ENCODE measurements at regions of chr1 and their contacts with region 1.

Region 1: DNA sequence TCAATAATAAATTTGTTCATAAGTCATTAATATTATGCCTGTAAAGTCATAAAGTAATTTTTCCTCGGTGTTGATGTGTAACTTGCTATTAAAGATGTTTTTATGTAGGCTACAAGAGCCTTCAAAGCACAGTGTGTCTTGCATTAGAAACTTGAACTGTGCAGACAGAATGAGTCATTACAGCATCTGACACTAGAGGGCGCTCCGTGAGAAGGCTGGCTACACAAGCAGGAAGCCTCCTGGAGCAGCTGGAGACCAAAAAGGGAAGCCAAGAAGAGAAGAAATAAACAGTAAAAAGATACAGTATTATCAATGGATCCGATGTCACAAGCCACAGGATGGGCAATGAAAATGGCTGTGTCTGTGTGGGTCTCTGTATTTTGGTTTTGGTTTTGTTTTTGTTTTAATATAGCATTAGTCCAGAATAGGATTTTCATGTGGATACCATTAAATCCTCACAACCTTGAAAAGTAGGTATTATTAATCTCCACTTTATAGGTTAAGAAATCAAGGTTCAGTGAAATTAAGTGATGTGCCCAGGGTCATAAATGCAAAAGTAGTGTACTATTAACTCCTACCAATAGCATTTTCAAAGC is 16.1 kb upstream of the LRRC8D start:
- DNase-seq: peak; percentile 75
- H3K4me3 ChIP-seq: peak overlapping the region in 1 of 2 experiments; percentile 24; a peak in 1 of 4 replicates
- H3K27ac ChIP-seq: no peak overlapping the region
- H3K4me1 ChIP-seq: no peaks in the 10 kb centered on the region; a peak in 1 of 4 replicates
- H3K27me3 ChIP-seq: no peaks in the 10 kb centered on the region
- CTCF ChIP-seq: peak; percentile 95
- EP300 ChIP-seq: no peak
- RAD21 ChIP-seq: peak; percentile 96

Region 2: GRCh38 chr1:89780721-89781120 is 24.0 kb before region 1 on chr1:
- CTCF ChIA-PET with region 1: interaction called, 13 read pairs
- POLR2A ChIA-PET with region 1: no interaction called
- DNase-seq: peak; percentile 31
- H3K4me3 ChIP-seq: no peak overlapping the region
- H3K27ac ChIP-seq: no peak overlapping the region
- H3K4me1 ChIP-seq: no peaks in the 10 kb centered on the region; a peak in 1 of 4 replicates
- H3K27me3 ChIP-seq: no peaks in the 10 kb centered on the region
- CTCF ChIP-seq: peak; percentile 63
- EP300 ChIP-seq: no peak
- RAD21 ChIP-seq: peak; percentile 70

Region 3: DNA sequence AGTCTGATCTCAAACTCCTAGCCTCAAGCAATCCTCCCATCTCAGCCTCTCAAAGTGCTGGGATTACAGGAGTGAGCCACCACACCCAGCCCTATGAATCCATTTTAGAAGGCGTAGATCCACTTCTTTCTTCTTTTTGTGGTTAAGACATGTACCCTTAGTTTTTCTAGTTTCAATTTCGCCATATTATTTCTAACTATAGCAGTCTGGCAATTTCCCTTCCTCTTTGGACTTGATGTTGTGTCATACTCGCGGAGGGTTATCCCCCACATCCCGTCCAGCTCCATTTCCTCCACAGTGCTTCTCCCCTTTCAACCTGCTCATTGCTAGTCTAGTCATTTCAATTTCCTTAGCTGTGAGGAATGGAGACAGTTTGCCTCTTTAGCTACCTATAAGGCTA is 10.9 kb after region 1 on chr1:
- CTCF ChIA-PET with region 1: interaction called, 24 read pairs
- POLR2A ChIA-PET with region 1: no interaction called
- DNase-seq: no peak
- H3K4me3 ChIP-seq: no peak overlapping the region
- H3K27ac ChIP-seq: no peak overlapping the region
- H3K4me1 ChIP-seq: peaks cover 4% of the 10 kb centered on the region in 2 experiments; a peak in 3 of 4 replicates
- H3K27me3 ChIP-seq: no peaks in the 10 kb centered on the region
- CTCF ChIP-seq: no peak
- EP300 ChIP-seq: no peak
- RAD21 ChIP-seq: no peak

Region 4: GRCh38 chr1:89843281-89844121 is 38.8 kb after region 1 on chr1:
- CTCF ChIA-PET with region 1: interaction called, 17 read pairs
- POLR2A ChIA-PET with region 1: no interaction called
- DNase-seq: peak; percentile 93
- H3K4me3 ChIP-seq: peak overlapping the region; percentile 72 to 77
- H3K27ac ChIP-seq: peak overlapping the region; percentile 43 to 55; a peak in 3 of 4 replicates
- H3K4me1 ChIP-seq: peaks cover 7 to 22% of the 10 kb centered on the region in 2 experiments; a peak in 3 of 4 replicates
- H3K27me3 ChIP-seq: no peaks in the 10 kb centered on the region
- CTCF ChIP-seq: peak; percentile 72
- EP300 ChIP-seq: no peak
- RAD21 ChIP-seq: peak; percentile 46

Region 5: DNA sequence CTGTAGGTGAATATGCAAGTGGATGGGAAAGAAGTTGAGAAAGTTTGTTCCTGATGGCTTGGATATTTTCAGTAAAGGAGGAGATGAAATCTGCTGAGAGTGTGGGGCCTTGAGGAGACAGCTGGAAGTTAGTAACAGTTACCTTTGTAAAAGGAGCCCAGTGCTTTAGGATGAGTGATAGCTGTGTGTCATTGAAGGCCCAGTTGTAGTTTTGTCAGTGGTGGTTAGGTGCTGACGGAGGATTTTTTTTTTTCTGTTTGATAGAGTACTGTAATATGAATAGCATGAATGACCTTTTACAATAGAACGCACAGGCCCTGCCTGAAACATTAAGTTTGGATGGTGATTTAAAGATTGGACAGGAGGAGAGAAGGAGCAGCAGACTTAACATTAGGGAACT is 49.4 kb after region 1 on chr1:
- CTCF ChIA-PET with region 1: no interaction called
- POLR2A ChIA-PET with region 1: no interaction called
- DNase-seq: no peak
- H3K4me3 ChIP-seq: no peak overlapping the region
- H3K27ac ChIP-seq: no peak overlapping the region
- H3K4me1 ChIP-seq: peaks cover 0 to 14% of the 10 kb centered on the region in 2 experiments; a peak in 3 of 4 replicates
- H3K27me3 ChIP-seq: no peaks in the 10 kb centered on the region
- CTCF ChIP-seq: no peak
- EP300 ChIP-seq: no peak
- RAD21 ChIP-seq: no peak

Region 6: GRCh38 chr1:89994231-89994804 is 189.6 kb after region 1 on chr1:
- CTCF ChIA-PET with region 1: interaction called, 31 read pairs
- POLR2A ChIA-PET with region 1: no interaction called
- DNase-seq: no peak
- H3K4me3 ChIP-seq: peak overlapping the region; percentile 92
- H3K27ac ChIP-seq: peak overlapping the region; percentile 83 to 95
- H3K4me1 ChIP-seq: peaks cover 17 to 28% of the 10 kb centered on the region in 2 experiments; a peak in 3 of 4 replicates
- H3K27me3 ChIP-seq: no peaks in the 10 kb centered on the region
- CTCF ChIP-seq: no peak
- EP300 ChIP-seq: no peak
- RAD21 ChIP-seq: no peak

Measured in SK-N-SH (cell line).